Activated CD4-positive, alpha-beta memory T cell treated with anti-CD3 and anti-CD28 coated beads, Interleukin-2, amount 10 ng/mL, durations not matched to agents 7 days and 5 days (primary cell): ENCODE measurements at regions of chr3 and their contacts with region 1.

Region 1: DNA sequence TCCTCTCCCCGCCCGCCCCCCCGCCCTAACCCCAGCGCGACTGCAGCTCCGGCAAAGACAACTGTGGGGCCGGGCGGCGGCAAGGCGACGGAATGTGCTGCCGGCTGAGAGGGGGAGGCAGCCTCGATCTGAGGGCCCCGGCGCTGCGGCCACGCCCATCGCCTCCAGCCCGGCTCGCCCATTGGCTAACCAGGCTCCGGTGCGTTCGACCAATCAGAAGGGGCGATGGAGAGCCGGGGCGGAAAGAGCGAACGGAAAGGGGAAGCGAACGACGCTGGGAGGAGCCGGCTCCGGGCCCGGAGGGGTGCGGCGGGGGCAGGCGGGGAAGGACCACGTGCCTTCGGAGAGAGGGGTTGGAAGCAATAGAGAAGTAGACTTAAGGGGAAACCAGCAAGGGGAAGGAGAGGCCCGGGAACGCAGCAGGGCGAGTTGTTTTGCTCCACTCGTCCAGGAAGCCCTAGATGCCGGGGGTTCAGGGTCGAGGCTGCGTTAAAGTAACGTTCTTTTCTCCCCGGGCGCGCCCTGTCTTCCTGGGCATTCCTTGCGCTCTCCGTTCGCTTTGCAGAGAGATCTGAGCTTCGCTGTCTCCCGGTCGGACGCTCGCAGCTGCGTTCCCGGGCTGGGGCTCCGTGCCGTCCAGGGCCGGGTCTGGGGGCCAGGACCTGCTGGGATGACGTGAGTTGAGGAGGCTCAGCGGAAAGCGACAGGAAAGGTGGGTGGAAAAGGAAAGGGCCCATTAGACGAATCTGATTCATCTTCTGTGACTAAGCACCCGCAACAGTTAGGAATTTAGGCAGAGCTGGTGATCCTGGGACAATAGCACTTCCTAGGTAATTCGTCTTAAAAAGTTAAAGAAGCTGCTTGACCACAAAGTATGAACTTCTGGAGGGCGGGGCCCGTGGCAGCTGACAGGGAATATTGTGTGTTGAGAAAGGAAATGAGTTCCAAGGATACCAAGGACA is at the start of gene KPNA4:
- DNase-seq: peak; percentile 97
- H3K4me3 Mint-ChIP-seq: peak within 1 kb of the TSS; percentile 97
- H3K27ac Mint-ChIP-seq: peak within 1 kb of the TSS; percentile 96
- H3K4me1 Mint-ChIP-seq: peaks cover 64% of the 10 kb centered on the region
- H3K27me3 Mint-ChIP-seq: no peaks in the 10 kb centered on the region
- total RNA-seq, gene KPNA4: 37.3 TPM

Region 2: DNA sequence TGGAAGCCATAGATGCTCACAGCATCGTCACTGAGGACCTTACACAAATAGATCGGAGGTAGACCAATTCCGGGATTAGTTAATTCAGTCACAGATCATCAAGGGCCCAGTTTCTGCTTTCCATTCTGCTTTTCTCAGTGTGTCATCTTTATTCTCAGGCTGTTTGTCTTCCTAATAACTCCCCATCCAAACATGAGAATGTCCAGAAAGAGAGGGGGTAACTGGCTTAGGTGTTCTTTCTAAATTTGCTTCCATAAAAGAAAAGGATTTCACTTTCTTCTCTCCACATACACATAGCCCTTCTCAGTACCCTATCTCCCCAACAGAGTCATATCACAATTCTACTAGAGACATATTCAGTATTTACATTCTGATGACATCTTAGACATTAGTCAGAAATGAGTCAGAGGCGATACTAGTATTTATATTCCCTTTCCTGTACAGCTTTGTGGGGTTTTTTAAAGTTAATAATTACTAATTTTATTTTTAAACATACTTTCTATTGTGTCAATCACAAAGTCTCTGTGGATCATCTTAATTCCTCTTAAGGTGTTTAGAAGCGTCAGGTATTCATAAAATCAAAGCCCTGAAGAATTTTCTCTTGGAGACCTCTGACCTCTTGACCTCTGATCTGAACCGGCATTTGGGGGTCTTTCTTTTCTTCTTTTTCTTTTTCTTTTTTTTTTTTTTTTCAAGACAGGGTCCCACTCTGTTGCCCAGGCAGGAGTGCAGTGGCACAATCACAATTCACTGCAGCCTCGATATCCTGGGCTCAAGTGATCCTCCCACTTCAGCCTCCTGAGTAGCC is 601.4 kb before region 1 on chr3:
- CTCF ChIA-PET with region 1: no interaction called
- POLR2A ChIA-PET with region 1: no interaction called
- DNase-seq: no peak
- H3K4me3 Mint-ChIP-seq: no peak overlapping the region
- H3K27ac Mint-ChIP-seq: no peak overlapping the region
- H3K4me1 Mint-ChIP-seq: peaks cover 3% of the 10 kb centered on the region
- H3K27me3 Mint-ChIP-seq: peaks cover 19% of the 10 kb centered on the region

Region 3: GRCh38 chr3:160399125-160400029 is 166.3 kb before region 1 on chr3 and contains the starts of genes IFT80 and SMC4:
- CTCF ChIA-PET with region 1: no interaction called
- POLR2A ChIA-PET with region 1: interaction called, 10 read pairs
- DNase-seq: peak; percentile 97
- H3K4me3 Mint-ChIP-seq: peak within 1 kb of the TSS; percentile 94
- H3K27ac Mint-ChIP-seq: peak within 1 kb of the TSS; percentile 89
- H3K4me1 Mint-ChIP-seq: peaks cover 44% of the 10 kb centered on the region
- H3K27me3 Mint-ChIP-seq: no peaks in the 10 kb centered on the region
- total RNA-seq, gene IFT80: 22.8 to 25.9 TPM
- total RNA-seq, gene SMC4: 217 to 222 TPM